ENCODE measurements at regions of chr7 and their contacts with region 1.

Region 1: GRCh38 chr7:70720191-70720873 is 411.6 kb upstream of the GALNT17 start:
- DNase-seq: no peak
- ATAC-seq: peak; percentile 13; the same call in 1 of the 3 replicates
- H3K4me3 ChIP-seq: no peak overlapping the region
- H3K27ac ChIP-seq: peak overlapping the region; percentile 72
- H3K4me1 ChIP-seq: peaks cover 33% of the 10 kb centered on the region
- H3K27me3 ChIP-seq: no peaks in the 10 kb centered on the region
- CTCF ChIP-seq: peak; percentile 12 to 23 (median 16); a peak in 2 of 6 replicates
- EP300 ChIP-seq: no peak
- POLR2A ChIP-seq: no peak
- RAD21 ChIP-seq: peak; percentile 56

Region 2: GRCh38 chr7:70569335-70569819 is 151.0 kb before region 1 on chr7:
- CTCF ChIA-PET with region 1: no interaction called
- POLR2A ChIA-PET with region 1: no interaction called
- RAD21 ChIA-PET with region 1: no interaction called
- SMC1A ChIA-PET with region 1: no interaction called
- in situ Hi-C with region 1: no loop called
- intact Hi-C with region 1: no loop called
- DNase-seq: peak; percentile 12
- ATAC-seq: no peak; the same call in 2 of the 3 replicates
- H3K4me3 ChIP-seq: no peak overlapping the region
- H3K27ac ChIP-seq: no peak overlapping the region
- H3K4me1 ChIP-seq: no peaks in the 10 kb centered on the region
- H3K27me3 ChIP-seq: no peaks in the 10 kb centered on the region
- CTCF ChIP-seq: no peak
- EP300 ChIP-seq: no peak
- POLR2A ChIP-seq: no peak
- RAD21 ChIP-seq: no peak

Region 3: DNA sequence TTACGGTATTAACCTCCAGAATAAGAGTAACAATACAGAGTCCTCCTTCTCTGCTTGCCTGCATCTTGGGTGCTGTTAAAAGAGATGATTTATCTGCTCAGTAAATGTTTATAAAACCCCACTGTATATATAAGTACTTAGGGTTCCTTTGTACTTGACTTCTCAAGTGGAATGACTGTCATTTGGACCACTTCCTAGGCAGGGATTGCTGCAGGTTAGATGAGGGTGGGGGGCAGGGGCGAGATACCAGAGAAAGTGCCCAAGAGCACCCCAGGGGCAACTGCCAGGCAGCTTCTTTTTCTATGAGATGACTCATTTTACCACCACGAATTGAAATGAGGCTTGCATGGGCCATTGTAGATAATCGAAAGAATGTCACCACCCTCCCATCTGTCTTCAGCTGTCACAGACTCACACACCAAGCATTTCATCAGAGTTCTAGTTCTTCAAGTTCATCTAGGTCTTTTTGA is 10.3 kb before region 1 on chr7:
- CTCF ChIA-PET with region 1: interaction called, 5 read pairs
- POLR2A ChIA-PET with region 1: interaction called, 7 read pairs
- RAD21 ChIA-PET with region 1: interaction called, 7 read pairs
- SMC1A ChIA-PET with region 1: interaction called, 42 read pairs
- in situ Hi-C with region 1: no loop called
- intact Hi-C with region 1: no loop called
- DNase-seq: peak; percentile 73
- ATAC-seq: peak; percentile 91
- H3K4me3 ChIP-seq: no peak overlapping the region
- H3K27ac ChIP-seq: peak overlapping the region; percentile 53; the same call in 1 of the 2 replicates
- H3K4me1 ChIP-seq: peaks cover 16% of the 10 kb centered on the region
- H3K27me3 ChIP-seq: no peaks in the 10 kb centered on the region
- CTCF ChIP-seq: no peak
- EP300 ChIP-seq: peak in 1 of 2 experiments; percentile 64; a peak in 1 of 4 replicates
- POLR2A ChIP-seq: no peak
- RAD21 ChIP-seq: no peak

Region 4: DNA sequence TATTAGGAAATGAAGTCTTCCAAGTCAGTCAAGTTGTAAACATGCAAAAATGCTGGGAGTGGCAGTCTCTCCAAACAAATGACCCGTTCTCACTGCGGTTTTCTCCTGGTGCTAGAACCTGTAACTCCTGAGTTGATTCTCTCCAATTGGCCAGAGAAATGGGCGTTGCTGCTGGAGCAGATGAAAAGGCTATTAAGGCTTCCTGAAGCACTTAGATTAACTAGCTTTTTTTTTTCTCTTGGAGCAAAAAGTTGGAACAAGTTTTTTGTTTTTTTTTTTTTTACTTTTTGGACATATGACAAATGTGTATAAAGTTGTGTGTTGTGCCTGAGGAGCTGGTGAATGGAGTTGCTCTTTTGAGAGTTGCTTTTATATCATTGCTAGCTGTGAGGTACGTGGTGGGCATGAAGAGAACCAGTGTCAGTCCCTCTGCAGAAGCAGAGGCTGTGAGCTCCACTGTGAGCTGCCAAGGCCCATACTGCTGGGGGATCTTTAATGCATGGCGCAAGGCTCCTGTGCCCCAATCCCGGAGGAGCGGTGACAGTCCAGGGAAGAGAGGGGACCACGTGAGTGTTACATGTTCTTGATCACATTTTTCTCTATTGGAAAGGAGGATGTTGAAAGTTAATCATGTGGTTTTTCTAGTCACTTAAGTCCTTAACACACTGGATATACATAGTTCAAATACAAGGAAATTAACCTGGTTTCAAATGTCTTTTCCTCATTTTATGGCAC is 18.0 kb after region 1 on chr7:
- CTCF ChIA-PET with region 1: interaction called, 5 read pairs
- POLR2A ChIA-PET with region 1: interaction called, 5 read pairs
- RAD21 ChIA-PET with region 1: interaction called, 7 read pairs
- SMC1A ChIA-PET with region 1: interaction called, 11 read pairs
- in situ Hi-C with region 1: no loop called
- intact Hi-C with region 1: no loop called
- DNase-seq: no peak
- ATAC-seq: no peak
- H3K4me3 ChIP-seq: no peak overlapping the region
- H3K27ac ChIP-seq: no peak overlapping the region; the same call in 1 of the 2 replicates
- H3K4me1 ChIP-seq: peaks cover 19% of the 10 kb centered on the region; the same call in 1 of the 2 replicates
- H3K27me3 ChIP-seq: no peaks in the 10 kb centered on the region
- CTCF ChIP-seq: no peak
- EP300 ChIP-seq: no peak
- POLR2A ChIP-seq: no peak
- RAD21 ChIP-seq: no peak

Region 5: DNA sequence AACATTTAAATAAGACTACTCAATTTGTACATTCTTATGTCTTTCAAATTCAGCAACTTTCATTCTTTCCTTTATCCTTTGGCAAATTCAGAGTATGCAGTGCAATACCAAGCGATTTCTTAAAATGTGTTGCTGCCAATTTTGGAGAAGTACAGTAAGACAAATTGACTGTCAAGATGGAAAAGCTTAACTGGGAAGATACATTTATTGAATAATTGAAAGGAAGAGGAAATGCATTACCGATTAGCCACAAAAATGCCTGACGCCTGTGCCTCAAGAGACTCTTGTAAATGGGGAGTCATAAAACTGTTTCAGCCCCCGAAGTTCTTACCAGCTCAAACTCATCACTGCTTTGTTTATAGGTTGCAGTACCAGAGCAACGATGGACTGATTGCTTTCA is 38.3 kb after region 1 on chr7:
- CTCF ChIA-PET with region 1: interaction called, 13 read pairs
- POLR2A ChIA-PET with region 1: interaction called, 12 read pairs
- RAD21 ChIA-PET with region 1: interaction called, 33 read pairs
- SMC1A ChIA-PET with region 1: interaction called, 51 read pairs
- in situ Hi-C with region 1: loop called (anchors 5 kb)
- intact Hi-C with region 1: no loop called
- DNase-seq: no peak
- ATAC-seq: no peak
- H3K4me3 ChIP-seq: no peak overlapping the region
- H3K27ac ChIP-seq: peak overlapping the region; percentile 11; the same call in 1 of the 2 replicates
- H3K4me1 ChIP-seq: peaks cover 45% of the 10 kb centered on the region
- H3K27me3 ChIP-seq: no peaks in the 10 kb centered on the region
- CTCF ChIP-seq: no peak
- EP300 ChIP-seq: no peak
- POLR2A ChIP-seq: no peak
- RAD21 ChIP-seq: no peak

Region 6: DNA sequence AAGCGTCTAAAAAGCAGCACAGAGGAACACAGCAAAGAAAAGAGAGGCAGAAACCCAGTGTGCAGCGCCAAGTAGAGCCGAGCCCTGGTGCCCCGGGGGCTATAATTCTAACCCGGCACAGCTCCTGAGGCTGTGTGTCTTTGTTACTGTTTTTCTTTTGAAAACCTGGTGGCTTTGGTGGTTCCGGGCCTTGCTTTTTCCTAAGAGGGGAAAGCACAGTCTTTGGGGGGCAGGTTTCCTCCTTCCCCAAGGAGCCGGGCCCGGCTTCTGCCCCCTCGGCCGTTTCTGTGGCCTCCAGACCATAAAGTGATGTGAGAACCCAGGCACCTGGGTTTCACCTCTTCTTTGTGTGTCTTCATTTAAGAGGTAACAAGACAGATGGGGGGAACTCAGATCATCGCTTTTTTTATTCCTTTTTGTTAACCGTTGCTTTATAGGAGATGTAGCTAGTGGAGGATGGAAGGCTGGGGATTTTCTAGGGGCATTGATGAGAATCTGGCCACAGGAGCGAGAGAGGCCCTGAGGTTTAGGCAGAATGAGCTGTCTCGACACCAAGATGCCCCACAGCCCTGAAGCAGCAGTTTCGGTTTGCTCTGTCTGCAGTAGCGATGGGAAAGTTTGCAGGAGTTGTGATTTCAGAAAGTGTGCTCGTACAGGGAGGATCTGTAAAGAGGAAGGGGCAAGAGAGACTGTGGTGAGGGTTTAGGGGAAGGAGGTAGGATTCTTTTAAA is 43.8 kb after region 1 on chr7:
- CTCF ChIA-PET with region 1: interaction called, 13 read pairs
- POLR2A ChIA-PET with region 1: interaction called, 12 read pairs
- RAD21 ChIA-PET with region 1: interaction called, 33 read pairs
- SMC1A ChIA-PET with region 1: interaction called, 51 read pairs
- in situ Hi-C with region 1: loop called (anchors 5 kb)
- intact Hi-C with region 1: no loop called
- DNase-seq: peak; percentile 98
- ATAC-seq: peak; percentile 88
- H3K4me3 ChIP-seq: peak overlapping the region; percentile 54
- H3K27ac ChIP-seq: peak overlapping the region; percentile 98
- H3K4me1 ChIP-seq: peaks cover 43% of the 10 kb centered on the region
- H3K27me3 ChIP-seq: no peaks in the 10 kb centered on the region
- CTCF ChIP-seq: no peak
- EP300 ChIP-seq: peak in 1 of 2 experiments; percentile 72
- POLR2A ChIP-seq: peak; percentile 27; the same call in 1 of the 2 replicates
- RAD21 ChIP-seq: 0 out of 2 replicates have a peak, but pooled peaks have one; percentile 16

Region 7: DNA sequence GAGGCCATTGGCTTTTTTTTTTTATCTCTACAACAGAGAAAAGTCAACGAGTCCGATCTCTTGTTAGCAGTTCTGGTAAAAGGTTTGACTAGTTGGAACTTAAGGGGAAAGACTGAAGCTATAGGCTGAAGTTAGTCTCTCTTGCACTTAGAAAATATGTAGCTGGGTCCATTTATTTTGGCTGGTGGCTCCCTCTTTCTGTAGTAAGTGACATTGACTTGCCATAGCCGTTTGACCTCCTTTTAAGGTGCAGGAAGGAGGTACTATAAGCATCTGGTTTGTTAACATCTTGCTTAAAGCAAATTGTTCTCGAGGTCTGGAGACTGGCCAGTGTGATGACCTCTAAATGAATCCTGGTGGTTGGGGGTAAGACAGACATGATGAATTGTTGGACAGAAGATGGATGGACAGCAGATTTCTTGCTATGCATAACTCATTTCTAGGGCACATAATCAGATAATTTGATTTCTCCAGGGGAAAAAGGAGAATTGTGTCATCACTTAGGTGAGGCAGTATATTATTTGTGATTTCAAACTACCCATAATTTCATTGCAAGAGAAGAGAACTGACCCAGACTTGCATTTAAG is 55.3 kb after region 1 on chr7:
- CTCF ChIA-PET with region 1: interaction called, 131 read pairs
- POLR2A ChIA-PET with region 1: interaction called, 7 read pairs
- RAD21 ChIA-PET with region 1: interaction called, 125 read pairs
- SMC1A ChIA-PET with region 1: interaction called, 148 read pairs
- in situ Hi-C with region 1: no loop called
- intact Hi-C with region 1: loop called (anchors 2 kb)
- DNase-seq: peak; percentile 40
- ATAC-seq: peak; percentile 79
- H3K4me3 ChIP-seq: no peak overlapping the region
- H3K27ac ChIP-seq: peak overlapping the region; percentile 21
- H3K4me1 ChIP-seq: peaks cover 14% of the 10 kb centered on the region
- H3K27me3 ChIP-seq: no peaks in the 10 kb centered on the region
- CTCF ChIP-seq: peak; percentile 48 to 66 (median 57); a peak in 5 of 6 replicates
- EP300 ChIP-seq: no peak
- POLR2A ChIP-seq: no peak
- RAD21 ChIP-seq: peak; percentile 71

Measured in GM12878 (cell line).